Gastrocnemius medialis (tissue), 4 donors: ENCODE measurements at regions of chr6 and their contacts with region 1.

Region 1: DNA sequence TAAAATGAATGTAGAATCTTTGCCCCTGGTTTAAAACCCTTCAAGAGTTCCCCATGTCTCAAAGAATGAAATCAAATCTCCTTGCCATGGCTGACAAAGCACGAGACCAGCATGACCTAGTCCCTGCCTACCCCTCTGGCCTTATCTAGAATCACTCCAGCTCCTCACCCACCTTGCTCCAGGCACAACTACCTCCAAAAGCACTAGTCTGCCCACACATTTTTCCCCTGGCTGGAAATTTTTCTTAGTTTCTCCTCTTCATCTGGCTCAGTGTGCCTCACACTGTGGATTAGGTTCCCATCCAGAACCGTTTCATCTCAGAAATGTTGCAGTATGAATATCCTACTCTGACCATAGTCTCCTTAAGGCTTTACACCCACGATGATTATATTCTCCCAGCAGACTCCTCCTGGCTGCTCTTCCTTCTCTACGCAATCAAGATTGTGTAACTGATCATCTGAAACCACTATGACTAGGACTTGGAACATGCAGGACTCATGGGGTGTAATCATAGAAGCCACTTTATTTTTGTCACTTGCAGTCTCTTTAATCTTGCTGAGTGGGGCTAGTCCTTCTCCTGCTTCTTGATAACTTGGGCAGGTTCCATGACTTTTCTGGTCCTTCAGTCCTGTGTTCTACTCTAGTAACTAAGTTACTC is 7.8 kb upstream of the MRS2 start:
- DNase-seq: peak; percentile 56 to 66
- ATAC-seq: peak; percentile 99
- H3K4me3 ChIP-seq: no peak overlapping the region
- H3K27ac ChIP-seq: peak overlapping the region; percentile 79 to 93 (median 90)
- H3K4me1 ChIP-seq: peaks cover 9 to 13% of the 10 kb centered on the region in 2 donors
- H3K27me3 ChIP-seq: no peaks in the 10 kb centered on the region
- CTCF ChIP-seq: no peak
- POLR2A ChIP-seq: no peak

Region 2: GRCh38 chr6:24274441-24275083 is 120.3 kb before region 1 on chr6:
- in situ Hi-C with region 1: loop called in 2 of 4 experiments (anchors 5 to 25 kb)
- intact Hi-C with region 1: no loop called
- DNase-seq: no peak
- ATAC-seq: no peak
- H3K4me3 ChIP-seq: no peak overlapping the region
- H3K27ac ChIP-seq: no peak overlapping the region
- H3K4me1 ChIP-seq: no peaks in the 10 kb centered on the region
- H3K27me3 ChIP-seq: no peaks in the 10 kb centered on the region
- CTCF ChIP-seq: peak in 2 of 5 experiments; percentile 39 to 53
- POLR2A ChIP-seq: no peak

Region 3: DNA sequence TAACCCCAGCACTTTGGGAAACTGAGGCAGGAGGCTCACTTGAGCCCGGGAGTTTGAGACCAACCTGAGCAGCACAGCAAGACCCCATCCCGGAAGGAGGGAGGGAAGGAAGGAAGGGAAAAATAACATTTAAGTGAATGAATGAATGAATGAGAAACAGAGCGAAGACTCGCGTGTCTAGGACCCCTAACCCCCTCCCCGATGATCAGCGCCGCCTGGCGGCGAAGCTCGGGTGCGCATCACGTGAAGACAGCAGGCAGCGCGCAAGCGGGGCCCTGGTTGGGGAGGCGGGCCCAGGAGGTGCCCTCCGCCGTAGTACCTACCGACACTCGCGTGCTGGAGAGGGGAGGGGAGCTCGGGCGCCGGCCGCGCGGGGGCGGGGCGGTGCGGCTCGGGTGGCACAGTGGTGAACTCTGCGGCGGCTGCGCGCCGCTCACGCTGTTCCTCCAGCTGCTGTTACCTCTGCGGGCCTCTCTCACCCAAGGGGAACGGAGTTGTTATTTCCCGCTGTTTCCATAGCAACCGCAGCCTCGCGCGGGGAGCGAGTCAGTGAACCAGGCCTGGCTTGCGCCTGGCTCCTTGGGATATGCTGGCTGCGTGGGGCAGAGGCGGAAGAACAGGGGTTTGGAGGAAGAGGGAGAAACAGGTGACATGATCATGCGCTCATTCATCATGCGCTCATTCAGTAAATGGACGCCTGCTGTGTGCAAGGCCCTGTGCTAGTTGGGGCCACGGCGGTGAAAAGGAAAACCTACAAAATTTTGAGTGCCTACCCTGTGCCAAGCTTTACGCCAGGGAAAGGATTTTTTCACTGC is 35.1 kb before region 1 on chr6:
- in situ Hi-C with region 1: no loop called
- intact Hi-C with region 1: loop called (anchors 2 kb)
- DNase-seq: peak; percentile 25 to 63
- ATAC-seq: peak; percentile 80 to 87
- H3K4me3 ChIP-seq: peak overlapping the region; percentile 58 to 91 (median 62)
- H3K27ac ChIP-seq: peak overlapping the region in 3 of 4 donors; percentile 22 to 52 (median 25)
- H3K4me1 ChIP-seq: peaks cover 0 to 7% of the 10 kb centered on the region in 2 donors
- H3K27me3 ChIP-seq: no peaks in the 10 kb centered on the region
- CTCF ChIP-seq: peak; percentile 45 to 81 (median 67)
- POLR2A ChIP-seq: peak; percentile 15 to 19